Heart left ventricle (tissue), 16 donors: ENCODE measurements at regions of chr2 and their contacts with region 1.

Region 1: GRCh38 chr2:111100765-111101162 is 19.9 kb upstream of the BCL2L11 start:
- DNase-seq: no peak
- ATAC-seq: no peak
- H3K4me3 ChIP-seq: no peak overlapping the region
- H3K27ac ChIP-seq: no peak overlapping the region
- H3K4me1 ChIP-seq: no peaks in the 10 kb centered on the region
- H3K27me3 ChIP-seq: no peaks in the 10 kb centered on the region
- CTCF ChIP-seq: no peak
- POLR2A ChIP-seq: no peak

Region 2: DNA sequence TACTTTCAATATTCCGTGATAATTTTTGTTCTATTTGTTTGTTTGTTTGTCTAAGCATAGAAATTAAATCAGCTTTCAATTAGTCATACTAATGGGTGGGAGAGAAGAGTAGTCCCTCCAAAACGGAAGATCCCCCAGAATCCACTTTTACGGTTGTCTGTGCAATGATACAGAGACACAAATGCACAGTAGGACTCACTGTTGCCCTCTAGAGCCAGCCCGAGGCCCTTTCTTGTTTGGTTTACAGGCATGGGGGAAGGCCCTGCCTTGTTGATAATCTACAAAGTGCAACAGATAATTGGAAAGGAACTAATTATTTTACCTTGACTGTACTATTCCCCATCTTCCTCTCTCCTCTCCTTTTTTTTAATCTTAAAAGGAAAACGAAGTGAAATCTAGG is 247.3 kb before region 1 on chr2:
- intact Hi-C with region 1: loop called in 1 of 10 experiments (anchors 10 kb)
- DNase-seq: no peak
- ATAC-seq: peak in 1 of 4 donors; percentile 39
- H3K4me3 ChIP-seq: no peak overlapping the region
- H3K27ac ChIP-seq: no peak overlapping the region
- H3K4me1 ChIP-seq: peaks cover 0 to 3% (median 0%) of the 10 kb centered on the region in 12 donors
- H3K27me3 ChIP-seq: peaks cover 0 to 9% (median 3%) of the 10 kb centered on the region in 9 donors
- CTCF ChIP-seq: peak in 11 of 12 donors; percentile 7 to 56 (median 32)
- POLR2A ChIP-seq: no peak

Region 3: GRCh38 chr2:110955556-110955955 is 145.2 kb before region 1 on chr2:
- intact Hi-C with region 1: no loop called
- DNase-seq: no peak
- ATAC-seq: no peak
- H3K4me3 ChIP-seq: no peak overlapping the region
- H3K27ac ChIP-seq: no peak overlapping the region
- H3K4me1 ChIP-seq: no peaks in the 10 kb centered on the region
- H3K27me3 ChIP-seq: no peaks in the 10 kb centered on the region
- CTCF ChIP-seq: no peak
- POLR2A ChIP-seq: no peak

Region 4: DNA sequence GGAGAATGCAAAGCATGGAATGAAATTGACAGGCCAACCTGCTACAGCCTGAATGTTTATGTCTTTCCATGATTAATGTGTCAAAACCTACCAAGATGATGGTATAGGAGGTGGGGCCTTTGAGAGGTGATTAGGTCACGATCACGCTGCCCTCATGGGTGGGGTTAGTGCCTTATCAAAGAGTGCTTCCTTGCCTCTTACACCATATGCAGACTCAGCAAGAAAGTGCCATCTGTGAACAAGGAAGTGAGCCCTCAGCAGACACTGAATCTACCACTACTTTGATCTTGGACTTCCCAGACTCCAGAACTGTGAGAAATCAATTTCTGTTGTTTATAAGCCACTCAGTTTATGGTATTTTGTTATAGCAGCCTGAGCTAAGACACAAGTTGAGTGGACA is 127.5 kb before region 1 on chr2:
- intact Hi-C with region 1: no loop called
- DNase-seq: no peak
- ATAC-seq: no peak
- H3K4me3 ChIP-seq: no peak overlapping the region
- H3K27ac ChIP-seq: no peak overlapping the region
- H3K4me1 ChIP-seq: peaks cover 0 to 7% (median 0%) of the 10 kb centered on the region in 12 donors
- H3K27me3 ChIP-seq: no peaks in the 10 kb centered on the region
- CTCF ChIP-seq: no peak
- POLR2A ChIP-seq: no peak

Region 5: GRCh38 chr2:111072220-111072871 is 28.4 kb before region 1 on chr2:
- intact Hi-C with region 1: no loop called
- DNase-seq: no peak
- ATAC-seq: peak in 2 of 4 donors; percentile 24 to 80
- H3K4me3 ChIP-seq: no peak overlapping the region
- H3K27ac ChIP-seq: peak overlapping the region in 1 of 12 donors; percentile 16
- H3K4me1 ChIP-seq: peaks cover 0 to 16% (median 4%) of the 10 kb centered on the region in 12 donors
- H3K27me3 ChIP-seq: no peaks in the 10 kb centered on the region
- CTCF ChIP-seq: no peak
- POLR2A ChIP-seq: no peak

Region 6: DNA sequence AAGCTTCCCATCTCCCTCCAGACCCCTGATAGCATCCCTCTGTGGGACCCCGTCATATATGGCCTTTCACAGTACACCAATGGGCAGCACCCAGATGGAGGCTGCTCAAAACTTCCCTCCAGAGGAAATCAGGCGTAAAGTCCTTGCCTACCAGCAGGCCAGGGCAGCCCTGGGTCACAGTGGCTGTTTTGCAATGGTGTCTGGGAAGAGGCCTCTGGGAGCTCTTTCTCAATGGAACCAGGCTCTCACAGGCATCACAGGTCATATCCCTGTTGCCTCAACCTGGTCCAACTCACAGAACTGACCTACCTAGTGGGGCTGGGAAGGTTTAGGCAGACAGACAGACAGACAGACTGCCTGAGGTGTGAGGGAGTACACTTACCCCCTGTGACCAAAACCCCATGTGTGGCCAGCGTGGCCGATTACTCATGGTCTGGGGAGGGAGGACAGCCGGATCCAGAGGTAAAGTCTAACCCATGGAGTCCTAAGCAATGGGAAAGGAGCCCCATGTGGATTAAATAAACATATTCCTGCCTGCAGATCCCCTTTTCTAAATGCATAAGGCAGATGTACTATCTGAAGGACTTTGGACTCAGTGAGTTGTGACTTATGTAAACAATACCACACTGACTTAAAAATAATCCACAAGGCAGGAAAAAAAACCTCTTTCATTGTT is 78.1 kb after region 1 on chr2:
- intact Hi-C with region 1: no loop called
- DNase-seq: peak in 1 of 5 donors; percentile 7
- ATAC-seq: peak in 1 of 4 donors; percentile 15
- H3K4me3 ChIP-seq: no peak overlapping the region
- H3K27ac ChIP-seq: no peak overlapping the region
- H3K4me1 ChIP-seq: no peaks in the 10 kb centered on the region
- H3K27me3 ChIP-seq: no peaks in the 10 kb centered on the region
- CTCF ChIP-seq: no peak
- POLR2A ChIP-seq: no peak